H1 (cell line): ENCODE measurements at regions of chr16 and their contacts with region 1.

Region 1: DNA sequence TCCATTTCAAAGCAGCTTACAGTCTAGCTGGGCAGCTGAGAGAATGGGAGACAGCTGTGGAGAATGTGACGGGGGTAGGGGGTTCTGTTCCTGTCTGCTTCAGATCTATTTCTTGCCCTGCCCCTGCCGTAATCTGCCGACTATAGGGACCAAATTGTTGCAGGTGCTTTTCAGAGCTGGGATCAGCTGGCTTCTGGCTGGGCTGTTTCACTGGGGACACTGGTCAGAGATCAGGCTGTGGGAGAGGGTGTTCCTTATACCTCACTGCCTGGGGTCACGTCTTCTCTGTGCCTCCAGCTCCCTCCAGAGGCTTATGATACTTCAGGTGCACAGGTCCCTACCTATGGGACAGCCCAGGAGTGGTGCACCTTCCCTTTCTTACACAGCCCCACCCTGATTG is 514.9 kb upstream of the GOT2 start:
- DNase-seq: peak; percentile 13 to 52
- H3K4me3 ChIP-seq: no peak overlapping the region
- H3K27ac ChIP-seq: no peak overlapping the region
- H3K4me1 ChIP-seq: peaks cover 0 to 4% (median 0%) of the 10 kb centered on the region in 4 experiments; a peak in 1 of 7 replicates
- H3K27me3 ChIP-seq: no peaks in the 10 kb centered on the region
- CTCF ChIP-seq: peak; percentile 52 to 64 (median 57)
- EP300 ChIP-seq: no peak
- POLR2A ChIP-seq: no peak
- RAD21 ChIP-seq: peak; percentile 82 to 87

Region 2: GRCh38 chr16:58814348-58814801 is 434.6 kb before region 1 on chr16:
- CTCF ChIA-PET with region 1: interaction called, 13 read pairs
- POLR2A ChIA-PET with region 1: no interaction called
- DNase-seq: peak; percentile 13 to 65
- H3K4me3 ChIP-seq: peak overlapping the region in 3 of 4 experiments; percentile 31 to 50 (median 41); a peak in 5 of 8 replicates
- H3K27ac ChIP-seq: no peak overlapping the region
- H3K4me1 ChIP-seq: peaks cover 0 to 3% (median 0%) of the 10 kb centered on the region in 4 experiments; a peak in 2 of 7 replicates
- H3K27me3 ChIP-seq: no peaks in the 10 kb centered on the region
- CTCF ChIP-seq: peak; percentile 68 to 89 (median 77)
- EP300 ChIP-seq: no peak
- POLR2A ChIP-seq: no peak
- RAD21 ChIP-seq: peak; percentile 91 to 93